ENCODE measurements at regions of chr16 and their contacts with region 1.

Region 1: GRCh38 chr16:27401768-27402568 is at the start of gene IL21R:
- DNase-seq: peak; percentile 88
- H3K4me3 Mint-ChIP-seq: peak within 1 kb of the TSS; percentile 92
- H3K27ac Mint-ChIP-seq: peak within 1 kb of the TSS; percentile 96
- H3K4me1 Mint-ChIP-seq: peaks cover 70% of the 10 kb centered on the region
- H3K27me3 Mint-ChIP-seq: peaks cover 6% of the 10 kb centered on the region
- total RNA-seq, gene IL21R: 29.2 to 29.5 TPM

Region 2: DNA sequence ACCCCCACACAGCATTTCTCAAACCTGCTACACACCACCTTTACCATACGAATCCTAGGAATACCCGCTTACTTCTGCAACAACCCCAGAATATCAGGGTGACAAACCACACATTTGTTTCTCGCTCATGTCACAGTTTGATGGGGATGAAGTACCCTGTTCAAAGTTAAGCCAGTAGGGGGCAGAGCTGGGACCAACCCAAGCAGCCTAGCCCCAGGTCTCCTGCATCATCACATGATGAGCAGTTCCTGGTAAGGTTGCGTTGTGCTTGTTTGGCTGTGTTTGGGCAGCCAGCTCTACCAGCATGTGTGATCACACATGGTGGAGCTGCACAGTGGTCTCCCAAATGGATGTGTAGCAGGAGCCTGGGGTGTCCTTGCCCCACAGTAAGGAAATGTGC is 438.9 kb before region 1 on chr16:
- CTCF ChIA-PET with region 1: no interaction called
- POLR2A ChIA-PET with region 1: no interaction called
- DNase-seq: peak; percentile 17
- H3K4me3 Mint-ChIP-seq: no peak overlapping the region
- H3K27ac Mint-ChIP-seq: no peak overlapping the region
- H3K4me1 Mint-ChIP-seq: no peaks in the 10 kb centered on the region
- H3K27me3 Mint-ChIP-seq: no peaks in the 10 kb centered on the region

Region 3: DNA sequence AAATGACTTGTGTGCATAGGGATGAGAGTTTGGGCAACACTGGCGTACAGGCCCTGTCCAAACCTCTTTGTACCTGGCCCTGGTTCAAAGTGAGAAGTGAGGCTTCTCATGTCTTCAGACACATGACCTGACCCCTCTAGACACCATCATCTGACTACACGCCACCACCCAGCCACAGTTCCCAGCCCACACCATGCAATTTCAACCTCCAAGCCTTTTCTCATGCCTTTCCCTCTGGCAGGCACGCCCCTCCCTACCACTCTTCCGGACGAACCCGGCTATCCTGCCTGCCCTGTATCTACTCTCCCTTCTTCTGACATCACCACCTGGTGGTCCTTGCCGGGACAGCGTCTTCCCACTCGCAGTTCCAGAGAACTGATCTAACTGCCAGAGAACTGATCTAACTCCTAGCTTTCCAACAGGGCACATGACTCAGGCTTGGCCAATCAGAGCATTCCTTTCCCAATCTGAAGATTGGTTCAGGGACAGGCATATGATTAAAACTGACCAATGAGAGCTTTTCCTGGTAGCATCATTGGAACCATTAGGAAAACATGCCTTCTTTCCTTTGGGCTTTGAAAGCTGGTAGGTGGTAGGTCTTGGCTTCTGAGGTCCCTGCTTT is 27.1 kb before region 1 on chr16:
- CTCF ChIA-PET with region 1: interaction called, 9 read pairs
- POLR2A ChIA-PET with region 1: interaction called, 80 read pairs
- DNase-seq: peak; percentile 52
- H3K4me3 Mint-ChIP-seq: no peak overlapping the region
- H3K27ac Mint-ChIP-seq: no peak overlapping the region
- H3K4me1 Mint-ChIP-seq: peaks cover 33% of the 10 kb centered on the region
- H3K27me3 Mint-ChIP-seq: no peaks in the 10 kb centered on the region

Region 4: DNA sequence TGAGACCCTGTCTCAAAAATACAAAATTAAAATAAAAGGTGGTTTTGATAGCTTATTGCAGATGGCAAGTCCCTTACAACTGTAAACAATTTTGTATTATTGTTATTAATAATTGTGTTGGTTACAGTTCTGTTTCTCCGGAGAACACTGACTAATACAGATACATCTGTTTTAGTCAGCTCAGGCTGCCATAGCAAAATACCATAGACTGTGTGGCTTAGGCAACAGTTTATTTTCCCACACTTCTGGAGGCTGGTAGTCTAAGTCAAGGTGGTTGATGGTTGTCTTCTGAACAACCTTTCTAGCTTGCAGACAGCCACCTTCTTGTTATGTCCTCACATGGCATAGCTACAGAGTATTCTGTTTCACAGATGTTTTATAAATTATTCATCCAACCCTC is 14.2 kb before region 1 on chr16:
- CTCF ChIA-PET with region 1: interaction called, 6 read pairs
- POLR2A ChIA-PET with region 1: interaction called, 11 read pairs
- DNase-seq: no peak
- H3K4me3 Mint-ChIP-seq: no peak overlapping the region
- H3K27ac Mint-ChIP-seq: no peak overlapping the region
- H3K4me1 Mint-ChIP-seq: peaks cover 27% of the 10 kb centered on the region
- H3K27me3 Mint-ChIP-seq: peaks cover 2% of the 10 kb centered on the region

Region 5: DNA sequence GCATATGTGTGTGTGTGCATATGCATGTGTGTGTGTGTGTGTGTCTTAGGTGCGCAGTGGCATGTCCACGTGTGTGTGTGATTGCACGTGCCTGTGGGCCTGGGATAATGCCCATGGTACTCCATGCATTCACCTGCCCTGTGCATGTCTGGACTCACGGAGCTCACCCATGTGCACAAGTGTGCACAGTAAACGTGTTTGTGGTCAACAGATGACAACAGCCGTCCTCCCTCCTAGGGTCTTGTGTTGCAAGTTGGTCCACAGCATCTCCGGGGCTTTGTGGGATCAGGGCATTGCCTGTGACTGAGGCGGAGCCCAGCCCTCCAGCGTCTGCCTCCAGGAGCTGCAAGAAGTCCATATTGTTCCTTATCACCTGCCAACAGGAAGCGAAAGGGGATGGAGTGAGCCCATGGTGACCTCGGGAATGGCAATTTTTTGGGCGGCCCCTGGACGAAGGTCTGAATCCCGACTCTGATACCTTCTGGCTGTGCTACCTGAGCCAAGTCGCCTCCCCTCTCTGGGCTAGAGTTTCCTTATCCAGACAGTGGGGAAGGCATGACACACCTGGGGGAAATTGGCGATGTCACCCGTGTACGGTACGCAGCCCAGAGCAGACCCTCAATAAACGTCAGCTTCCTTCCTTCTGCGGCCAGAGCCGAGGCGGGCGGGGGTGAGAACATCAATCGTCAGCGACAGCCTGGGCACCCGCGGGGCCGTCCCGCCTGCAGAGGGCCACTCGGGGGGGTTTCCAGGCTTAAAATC is 47.6 kb after region 1 on chr16:
- CTCF ChIA-PET with region 1: interaction called, 5 read pairs
- POLR2A ChIA-PET with region 1: interaction called, 18 read pairs
- DNase-seq: peak; percentile 56
- H3K4me3 Mint-ChIP-seq: peak overlapping the region; percentile 18
- H3K27ac Mint-ChIP-seq: peak overlapping the region; percentile 50
- H3K4me1 Mint-ChIP-seq: peaks cover 62% of the 10 kb centered on the region
- H3K27me3 Mint-ChIP-seq: no peaks in the 10 kb centered on the region

Region 6: DNA sequence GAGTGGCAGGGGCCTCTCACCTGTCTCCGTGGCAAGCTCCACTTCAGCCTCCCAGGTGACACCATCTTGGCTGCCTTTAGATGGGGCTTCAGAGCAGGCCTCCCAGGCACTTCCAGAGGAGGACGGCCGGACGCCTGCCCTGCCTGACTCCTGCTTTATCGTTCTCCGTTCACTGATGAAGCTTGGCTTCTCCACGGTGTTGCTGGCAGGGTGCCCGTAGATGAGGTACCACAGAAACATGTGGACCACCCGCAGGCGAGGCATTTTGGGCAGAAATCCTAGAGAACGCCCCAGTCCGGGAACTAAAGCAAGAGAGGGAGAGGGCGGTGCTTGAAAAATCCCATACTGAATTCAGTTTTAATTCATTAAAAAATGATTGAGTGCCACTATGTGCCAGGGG is 93.2 kb after region 1 on chr16:
- CTCF ChIA-PET with region 1: no interaction called
- POLR2A ChIA-PET with region 1: no interaction called
- DNase-seq: no peak
- H3K4me3 Mint-ChIP-seq: no peak overlapping the region
- H3K27ac Mint-ChIP-seq: no peak overlapping the region
- H3K4me1 Mint-ChIP-seq: peaks cover 2% of the 10 kb centered on the region
- H3K27me3 Mint-ChIP-seq: no peaks in the 10 kb centered on the region